ENCODE measurements at regions of chr1 and their contacts with region 1.

Region 1: DNA sequence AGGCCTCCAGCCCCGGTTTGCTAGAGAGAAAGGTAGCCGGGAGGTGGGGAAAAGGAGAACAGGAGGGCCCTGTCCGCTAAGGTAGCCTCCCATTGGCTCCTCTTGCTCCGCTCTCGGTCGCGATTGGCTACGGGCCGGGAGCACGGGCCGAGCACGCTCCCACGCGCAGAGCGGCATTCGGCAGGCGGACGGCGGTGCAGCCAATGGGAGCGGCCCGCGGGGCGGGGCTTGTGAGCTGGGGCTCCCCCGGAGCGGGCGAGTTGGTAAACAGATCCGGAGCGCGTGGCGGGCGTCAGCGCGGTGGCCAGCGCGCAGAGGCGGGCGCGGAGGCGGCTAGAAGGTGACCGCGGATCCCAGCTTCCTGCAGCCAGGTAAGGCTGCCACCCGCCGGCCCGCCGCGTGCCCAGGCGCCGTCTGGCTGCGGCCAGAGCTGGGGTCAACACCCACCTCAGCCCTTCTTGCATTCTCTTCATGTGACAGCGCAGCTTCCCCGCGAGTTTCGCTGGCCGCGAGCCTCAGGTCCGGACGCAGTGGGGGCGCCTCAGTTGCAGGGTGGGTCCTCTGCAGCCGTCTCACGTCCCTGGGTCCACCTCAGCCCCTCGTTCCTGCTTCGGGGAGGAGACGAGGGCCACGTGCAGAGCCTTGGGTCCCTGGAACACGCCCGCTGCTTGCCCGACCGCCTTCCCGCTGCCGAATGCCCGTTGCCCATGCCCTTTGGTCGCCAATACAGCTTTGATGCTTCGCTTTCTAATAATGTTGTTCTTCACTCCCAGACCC is at the start of gene COQ8A:
- DNase-seq: peak; percentile 99 to 100
- ATAC-seq: peak; percentile 96 to 98 (median 96)
- H3K4me3 ChIP-seq: peak within 1 kb of the TSS; percentile 64 to 96 (median 76)
- H3K27ac ChIP-seq: peak within 1 kb of the TSS; percentile 91 to 99 (median 96)
- H3K4me1 ChIP-seq: peaks cover 12 to 69% (median 56%) of the 10 kb centered on the region in 9 donors
- H3K27me3 ChIP-seq: no peaks in the 10 kb centered on the region
- CTCF ChIP-seq: peak in 2 of 9 donors; percentile 6 to 7
- total RNA-seq, gene COQ8A: 167 to 495 (median 266) TPM

Region 2: GRCh38 chr1:226870401-226871279 is 69.6 kb before region 1 on chr1 and contains the start of gene PSEN2:
- intact Hi-C with region 1: no loop called
- DNase-seq: peak; percentile 71 to 81
- ATAC-seq: peak; percentile 82 to 92 (median 90)
- H3K4me3 ChIP-seq: peak within 1 kb of the TSS; percentile 63 to 90 (median 80)
- H3K27ac ChIP-seq: peak within 1 kb of the TSS; percentile 11 to 90 (median 79)
- H3K4me1 ChIP-seq: peaks cover 11 to 52% (median 23%) of the 10 kb centered on the region in 9 donors
- H3K27me3 ChIP-seq: no peaks in the 10 kb centered on the region
- CTCF ChIP-seq: peak in 5 of 9 donors; percentile 28 to 58 (median 31)
- total RNA-seq, gene PSEN2: 17.7 to 25.8 (median 20.2) TPM

Region 3: DNA sequence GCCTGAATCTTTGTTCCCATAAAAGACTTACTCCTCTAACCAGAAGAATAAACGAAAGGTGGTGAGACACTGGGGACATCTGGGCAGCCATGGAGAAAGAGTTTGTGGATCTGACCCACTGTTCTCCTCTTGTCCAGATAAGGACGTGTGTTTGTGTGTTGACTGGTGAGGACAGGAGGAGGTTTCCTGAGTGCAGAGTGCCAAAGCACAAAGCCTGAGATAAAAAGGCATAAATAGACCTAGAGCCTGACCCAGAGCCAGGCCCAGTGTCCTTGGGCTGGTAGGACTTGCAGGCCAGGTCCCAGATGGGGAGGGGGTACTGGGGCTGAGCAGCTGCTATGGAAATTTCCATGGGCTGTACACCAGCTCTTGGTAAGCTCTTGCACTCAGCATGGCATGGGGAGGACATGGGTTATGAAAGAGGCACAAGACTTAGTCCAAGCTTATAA is 19.7 kb before region 1 on chr1:
- intact Hi-C with region 1: loop called in 2 of 10 experiments (anchors 1 kb)
- DNase-seq: peak; percentile 71 to 78
- ATAC-seq: peak; percentile 92 to 98 (median 94)
- H3K4me3 ChIP-seq: no peak overlapping the region
- H3K27ac ChIP-seq: peak overlapping the region; percentile 79 to 89 (median 87)
- H3K4me1 ChIP-seq: peaks cover 0 to 36% (median 11%) of the 10 kb centered on the region in 9 donors
- H3K27me3 ChIP-seq: no peaks in the 10 kb centered on the region
- CTCF ChIP-seq: no peak

Region 4: DNA sequence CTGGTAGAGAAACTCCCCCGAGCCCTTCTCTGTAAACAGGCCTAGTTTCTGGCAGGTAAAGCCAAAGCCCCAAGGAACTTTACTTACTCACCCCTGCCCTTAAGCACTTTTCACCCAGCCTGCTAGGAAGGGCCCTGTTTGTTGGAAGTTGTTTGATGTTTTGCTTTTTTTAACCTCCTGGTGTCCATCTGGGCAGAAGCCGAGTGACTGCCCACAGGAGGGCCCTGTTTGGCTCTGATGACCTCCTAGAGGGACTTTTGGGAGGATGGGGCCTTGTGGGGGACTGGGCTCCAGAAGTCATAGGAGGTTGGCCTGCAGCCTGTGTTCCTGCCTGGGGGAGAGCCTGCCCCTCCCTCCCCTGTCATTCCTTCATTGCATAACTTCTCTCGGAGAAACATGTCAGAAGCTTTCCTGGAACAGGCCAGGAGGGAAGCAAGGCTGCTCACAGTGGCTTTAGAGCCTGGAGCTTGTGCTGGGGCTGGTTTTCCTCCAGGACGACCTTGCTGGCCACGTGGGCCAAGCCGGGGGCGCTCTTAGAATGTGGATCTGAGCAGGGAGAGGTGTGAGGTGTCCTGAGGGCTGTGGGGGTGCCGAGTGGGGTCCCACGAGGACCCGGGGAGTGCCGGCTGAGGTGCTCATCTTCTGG is 33.8 kb after region 1 on chr1:
- intact Hi-C with region 1: loop called in 2 of 10 experiments (anchors 2 to 5 kb)
- DNase-seq: peak in 1 of 2 donors; percentile 45
- ATAC-seq: peak; percentile 25 to 77 (median 67)
- H3K4me3 ChIP-seq: no peak overlapping the region
- H3K27ac ChIP-seq: peak overlapping the region; percentile 83 to 96 (median 92)
- H3K4me1 ChIP-seq: peaks cover 20 to 57% (median 38%) of the 10 kb centered on the region in 9 donors
- H3K27me3 ChIP-seq: no peaks in the 10 kb centered on the region
- CTCF ChIP-seq: no peak

Region 5: DNA sequence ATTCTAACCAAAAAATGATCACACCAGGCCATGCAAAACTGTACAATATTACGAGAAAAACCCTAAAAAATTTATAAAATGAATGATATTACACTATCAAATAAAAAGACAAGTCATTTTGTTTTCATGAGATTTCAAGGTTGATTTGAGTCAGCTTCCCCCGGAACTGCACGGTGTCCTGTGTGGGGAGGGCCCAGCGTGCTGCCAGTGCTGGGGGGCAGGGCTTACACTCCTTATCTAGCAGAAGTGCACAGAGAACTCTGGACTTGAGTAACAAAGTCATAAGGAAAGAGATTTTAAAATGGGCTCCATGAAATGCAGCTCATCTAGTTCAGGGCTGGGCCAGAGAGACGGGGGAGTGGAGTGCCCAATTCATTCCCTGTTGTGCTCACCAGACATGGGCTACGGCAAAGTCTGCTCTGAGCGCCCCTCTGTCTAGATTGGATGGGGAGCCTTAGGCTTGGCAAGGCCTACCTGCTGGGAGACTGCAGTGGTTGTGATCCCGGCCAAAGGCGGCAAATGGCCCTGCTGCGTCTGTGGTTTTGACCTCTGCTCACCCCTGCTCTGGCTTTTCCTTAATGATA is 50.0 kb after region 1 on chr1:
- intact Hi-C with region 1: loop called in 2 of 10 experiments (anchors 5 kb)
- DNase-seq: peak in 1 of 2 donors; percentile 33
- ATAC-seq: peak in 6 of 8 donors; percentile 11 to 39 (median 26)
- H3K4me3 ChIP-seq: no peak overlapping the region
- H3K27ac ChIP-seq: peak overlapping the region in 9 of 10 donors; percentile 1 to 75 (median 57)
- H3K4me1 ChIP-seq: peaks cover 8 to 84% (median 51%) of the 10 kb centered on the region in 9 donors
- H3K27me3 ChIP-seq: no peaks in the 10 kb centered on the region
- CTCF ChIP-seq: no peak

Measured in heart right ventricle (tissue), 16 donors.